Heart left ventricle (tissue), 16 donors: ENCODE measurements at regions of chr3 and their contacts with region 1.

Region 1: GRCh38 chr3:62299857-62300406 is 73.4 kb downstream of the FEZF2 start:
- DNase-seq: no peak
- ATAC-seq: no peak
- H3K4me3 ChIP-seq: no peak overlapping the region
- H3K27ac ChIP-seq: no peak overlapping the region
- H3K4me1 ChIP-seq: peaks cover 0 to 7% (median 0%) of the 10 kb centered on the region in 12 donors
- H3K27me3 ChIP-seq: no peaks in the 10 kb centered on the region
- CTCF ChIP-seq: no peak
- POLR2A ChIP-seq: no peak

Region 2: GRCh38 chr3:61184956-61185355 is 1115.0 kb before region 1 on chr3:
- intact Hi-C with region 1: no loop called
- DNase-seq: no peak
- ATAC-seq: no peak
- H3K4me3 ChIP-seq: no peak overlapping the region
- H3K27ac ChIP-seq: no peak overlapping the region
- H3K4me1 ChIP-seq: peaks cover 0 to 7% (median 0%) of the 10 kb centered on the region in 12 donors
- H3K27me3 ChIP-seq: no peaks in the 10 kb centered on the region
- CTCF ChIP-seq: no peak
- POLR2A ChIP-seq: no peak

Region 3: GRCh38 chr3:61813678-61814077 is 486.3 kb before region 1 on chr3:
- intact Hi-C with region 1: no loop called
- DNase-seq: no peak
- ATAC-seq: no peak
- H3K4me3 ChIP-seq: no peak overlapping the region
- H3K27ac ChIP-seq: no peak overlapping the region
- H3K4me1 ChIP-seq: peaks cover 11 to 70% (median 44%) of the 10 kb centered on the region in 12 donors
- H3K27me3 ChIP-seq: no peaks in the 10 kb centered on the region
- CTCF ChIP-seq: no peak
- POLR2A ChIP-seq: no peak

Region 4: GRCh38 chr3:62211675-62212429 is 88.1 kb before region 1 on chr3:
- intact Hi-C with region 1: loop called in 1 of 10 experiments (anchors 10 kb)
- DNase-seq: no peak
- ATAC-seq: no peak
- H3K4me3 ChIP-seq: no peak overlapping the region
- H3K27ac ChIP-seq: no peak overlapping the region
- H3K4me1 ChIP-seq: peaks cover 0 to 15% (median 0%) of the 10 kb centered on the region in 12 donors
- H3K27me3 ChIP-seq: no peaks in the 10 kb centered on the region
- CTCF ChIP-seq: no peak
- POLR2A ChIP-seq: no peak

Region 5: DNA sequence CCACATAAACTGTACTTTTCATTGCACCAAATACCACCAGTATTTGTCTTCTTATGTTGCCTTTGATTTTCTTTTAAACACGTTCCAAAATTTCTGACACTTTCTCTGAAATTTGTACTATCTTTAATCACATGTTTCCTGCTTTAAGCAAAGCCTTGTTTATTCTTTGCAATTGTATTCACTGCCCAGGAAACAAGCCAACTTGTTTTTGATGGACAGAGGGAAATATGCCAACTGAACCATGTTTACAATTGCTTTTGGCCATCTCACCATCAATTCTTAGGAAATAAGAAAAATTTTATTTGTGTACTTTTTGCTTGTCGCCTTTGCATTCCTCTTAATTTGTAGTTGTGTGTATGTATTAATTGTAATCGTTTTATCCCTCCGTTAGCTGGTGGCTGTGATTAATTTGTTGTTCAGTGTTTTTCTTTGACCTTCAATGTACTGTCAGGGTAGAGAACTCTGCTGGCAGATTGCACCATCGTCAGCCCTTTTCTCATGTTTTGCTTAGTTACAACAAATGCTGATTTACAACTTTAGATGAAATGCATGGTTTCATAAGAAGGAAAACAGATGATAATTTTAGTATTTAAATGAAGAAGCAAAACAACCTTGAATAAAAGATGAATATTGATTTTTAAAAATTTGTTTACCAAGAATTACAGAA is 92.8 kb after region 1 on chr3:
- intact Hi-C with region 1: no loop called
- DNase-seq: no peak
- ATAC-seq: no peak
- H3K4me3 ChIP-seq: no peak overlapping the region
- H3K27ac ChIP-seq: no peak overlapping the region
- H3K4me1 ChIP-seq: no peaks in the 10 kb centered on the region
- H3K27me3 ChIP-seq: peaks cover 0 to 22% (median 5%) of the 10 kb centered on the region in 9 donors
- CTCF ChIP-seq: no peak
- POLR2A ChIP-seq: no peak

Region 6: DNA sequence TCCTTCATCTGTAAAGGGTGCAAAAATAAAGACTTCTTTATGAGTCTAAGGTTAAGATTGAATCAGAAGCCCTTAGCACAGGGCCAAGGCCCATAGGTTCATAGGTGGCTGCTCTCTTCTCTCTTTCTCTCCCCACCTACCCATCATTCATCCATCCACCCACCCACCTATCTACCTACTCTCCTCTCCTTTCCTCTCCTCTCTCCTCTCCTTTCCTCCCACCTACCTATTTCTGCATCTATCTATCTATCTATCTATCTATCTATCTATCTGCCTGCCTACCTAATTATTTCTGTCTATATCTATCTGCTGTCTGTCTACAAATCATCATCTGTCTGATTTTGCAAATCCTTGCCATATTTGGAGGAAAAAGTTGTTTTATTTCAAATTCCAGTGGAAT is 210.0 kb after region 1 on chr3:
- intact Hi-C with region 1: no loop called
- DNase-seq: no peak
- ATAC-seq: no peak
- H3K4me3 ChIP-seq: no peak overlapping the region
- H3K27ac ChIP-seq: no peak overlapping the region
- H3K4me1 ChIP-seq: no peaks in the 10 kb centered on the region
- H3K27me3 ChIP-seq: no peaks in the 10 kb centered on the region
- CTCF ChIP-seq: no peak
- POLR2A ChIP-seq: no peak